ENCODE measurements at regions of chr2 and their contacts with region 1.

Region 1: DNA sequence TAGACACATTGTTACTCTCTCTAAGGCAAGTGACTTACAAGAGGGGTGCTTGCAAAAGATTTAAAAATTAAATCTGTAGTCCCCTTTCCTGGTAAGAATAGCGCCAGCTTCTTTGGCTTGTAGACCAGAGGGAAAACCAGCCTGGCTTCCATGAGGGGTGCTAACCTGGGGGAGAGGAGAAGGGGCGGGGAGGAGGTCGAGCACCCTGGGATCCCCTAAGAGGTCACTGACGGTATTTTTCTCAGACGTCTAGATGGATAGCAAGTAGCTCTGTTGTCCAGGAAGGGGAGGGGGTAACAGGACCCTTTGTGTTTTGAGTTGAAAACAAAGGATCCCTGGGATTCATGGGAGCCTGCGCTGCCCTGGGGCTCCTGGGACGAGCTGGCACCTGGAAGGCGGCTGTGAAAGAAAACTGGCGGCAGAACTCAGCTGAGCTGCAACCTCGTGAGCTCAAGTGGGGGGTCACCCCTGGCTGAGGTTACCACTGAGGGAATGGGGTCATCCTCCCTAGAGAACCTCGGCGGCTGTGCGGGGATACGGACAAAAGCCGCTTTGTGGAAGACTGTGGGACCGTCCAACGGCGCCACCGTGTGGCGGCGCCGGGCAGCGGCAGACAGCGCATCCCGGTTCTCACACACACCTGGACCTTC is 37.8 kb upstream of the MRPL19 start:
- H3K4me3 ChIP-seq: peak overlapping the region; percentile 20
- H3K27ac ChIP-seq: no peak overlapping the region
- H3K4me1 ChIP-seq: no peaks in the 10 kb centered on the region
- CTCF ChIP-seq: peak; percentile 79

Region 2: GRCh38 chr2:75560768-75561565 is 47.8 kb before region 1 on chr2 and contains the start of gene EVA1A:
- CTCF ChIA-PET with region 1: interaction called, 11 read pairs
- POLR2A ChIA-PET with region 1: no interaction called
- H3K4me3 ChIP-seq: peak within 1 kb of the TSS; percentile 68
- H3K27ac ChIP-seq: peak within 1 kb of the TSS; percentile 37; the same call in 1 of the 2 replicates
- H3K4me1 ChIP-seq: no peaks in the 10 kb centered on the region; the same call in 1 of the 2 replicates
- CTCF ChIP-seq: no peak

Region 3: DNA sequence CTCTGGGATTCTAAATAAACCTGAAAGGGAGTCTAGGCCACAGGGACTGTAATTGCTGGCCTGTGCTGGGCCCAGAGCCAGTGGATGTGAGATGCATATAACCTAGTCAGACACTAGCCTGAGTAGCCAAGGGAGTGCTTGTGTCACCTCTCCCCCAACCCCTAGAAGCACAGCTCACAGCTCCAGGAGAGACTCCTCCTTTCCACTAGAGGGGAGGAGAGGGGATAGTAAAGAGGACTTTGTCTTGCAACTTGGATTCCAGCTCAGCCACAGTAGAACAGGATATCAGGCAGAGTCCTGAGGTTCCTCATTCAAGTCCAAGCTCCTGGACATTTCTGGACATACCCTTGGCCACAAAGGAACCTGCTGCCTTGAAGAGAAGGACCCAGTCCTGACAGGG is 29.6 kb before region 1 on chr2:
- CTCF ChIA-PET with region 1: interaction called, 13 read pairs
- POLR2A ChIA-PET with region 1: no interaction called
- H3K4me3 ChIP-seq: no peak overlapping the region
- H3K27ac ChIP-seq: no peak overlapping the region
- H3K4me1 ChIP-seq: no peaks in the 10 kb centered on the region
- CTCF ChIP-seq: no peak

Region 4: DNA sequence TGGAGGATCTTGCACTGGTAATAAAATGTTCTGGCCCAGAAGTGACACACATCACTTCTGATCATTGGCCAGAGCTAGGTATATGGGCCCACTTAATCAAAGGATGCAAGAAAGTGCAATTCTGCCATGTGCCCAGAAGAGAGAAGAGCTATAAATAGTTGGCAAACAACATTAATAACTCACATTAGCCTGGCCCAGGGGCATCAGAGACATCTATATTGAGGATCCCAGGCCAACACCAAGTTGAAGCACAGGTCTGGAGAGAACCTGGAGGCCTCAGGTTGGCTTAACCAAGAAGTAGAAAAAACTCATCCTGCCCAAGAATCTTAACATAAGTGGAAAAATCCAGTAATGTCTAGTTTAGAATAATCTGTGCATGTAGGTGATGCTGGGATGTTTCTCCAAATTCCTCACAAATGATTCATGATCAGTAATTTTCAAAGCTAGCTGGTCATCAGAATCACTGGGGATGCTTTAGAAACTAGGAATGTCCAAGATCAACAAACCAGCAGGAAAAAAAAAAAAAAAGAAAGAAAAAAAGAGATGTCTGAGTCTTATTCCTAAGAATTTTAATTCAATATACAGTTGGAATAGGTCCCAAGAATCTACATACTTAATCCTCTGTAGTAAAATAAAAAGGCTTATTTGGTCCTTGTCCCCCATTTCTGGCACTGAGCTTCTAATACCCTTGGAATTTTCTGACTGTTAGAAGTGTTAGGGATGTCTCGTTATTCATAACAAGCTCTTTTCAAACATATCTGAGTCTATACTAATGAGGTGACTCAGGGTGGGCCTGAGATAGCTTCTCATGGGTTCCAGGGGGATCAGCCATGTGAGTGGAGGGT is 13.0 kb before region 1 on chr2:
- CTCF ChIA-PET with region 1: interaction called, 22 read pairs
- POLR2A ChIA-PET with region 1: no interaction called
- H3K4me3 ChIP-seq: no peak overlapping the region
- H3K27ac ChIP-seq: no peak overlapping the region
- H3K4me1 ChIP-seq: no peaks in the 10 kb centered on the region
- CTCF ChIP-seq: no peak

Region 5: DNA sequence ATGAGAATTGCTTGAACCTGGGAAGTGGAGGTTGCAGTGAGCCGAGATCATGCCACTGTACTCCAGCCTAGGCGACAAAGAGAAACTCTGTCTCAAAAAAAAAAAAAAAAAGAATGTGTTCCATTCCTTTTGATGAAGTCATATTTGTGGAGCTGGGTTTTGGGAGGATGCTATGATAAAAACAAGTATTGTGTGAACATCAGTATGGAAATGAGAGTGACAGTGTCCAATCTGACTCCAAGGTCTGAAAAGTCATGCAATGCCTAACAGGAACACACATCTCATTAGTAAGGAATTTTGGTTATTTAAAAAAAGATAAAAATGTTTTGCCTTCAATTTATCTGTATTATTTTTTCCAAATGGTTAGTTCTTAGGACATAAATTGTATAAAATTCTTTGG is 90.1 kb after region 1 on chr2:
- CTCF ChIA-PET with region 1: no interaction called
- POLR2A ChIA-PET with region 1: no interaction called
- H3K4me3 ChIP-seq: no peak overlapping the region
- H3K27ac ChIP-seq: no peak overlapping the region
- H3K4me1 ChIP-seq: 0 out of 2 replicates have a peak, but pooled peaks cover 3% of the 10 kb centered on the region
- CTCF ChIP-seq: no peak